Cardiac septum (tissue), 1 donor: ENCODE measurements at regions of chr9 and their contacts with region 1.

Region 1: DNA sequence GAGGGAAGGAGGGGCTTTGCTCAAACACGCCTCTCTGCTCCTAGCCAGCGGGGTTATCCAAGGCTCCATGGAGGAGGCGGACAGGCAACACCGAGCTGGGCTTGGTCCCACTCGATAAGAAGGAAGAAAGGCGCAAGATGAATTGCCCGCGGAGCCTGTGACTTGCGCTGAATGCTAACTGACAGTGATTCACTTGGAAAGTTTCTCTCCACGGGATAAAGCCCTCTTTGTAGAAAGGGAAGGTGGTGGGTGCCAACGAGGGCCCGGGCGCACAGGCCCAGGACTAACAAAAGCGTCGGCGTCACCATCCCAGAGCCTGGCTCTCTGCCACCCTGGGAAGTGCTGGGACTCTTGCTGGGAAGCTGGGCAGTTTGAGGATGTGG is 76.0 kb downstream of the VAV2 start:
- DNase-seq: no peak

Region 2: DNA sequence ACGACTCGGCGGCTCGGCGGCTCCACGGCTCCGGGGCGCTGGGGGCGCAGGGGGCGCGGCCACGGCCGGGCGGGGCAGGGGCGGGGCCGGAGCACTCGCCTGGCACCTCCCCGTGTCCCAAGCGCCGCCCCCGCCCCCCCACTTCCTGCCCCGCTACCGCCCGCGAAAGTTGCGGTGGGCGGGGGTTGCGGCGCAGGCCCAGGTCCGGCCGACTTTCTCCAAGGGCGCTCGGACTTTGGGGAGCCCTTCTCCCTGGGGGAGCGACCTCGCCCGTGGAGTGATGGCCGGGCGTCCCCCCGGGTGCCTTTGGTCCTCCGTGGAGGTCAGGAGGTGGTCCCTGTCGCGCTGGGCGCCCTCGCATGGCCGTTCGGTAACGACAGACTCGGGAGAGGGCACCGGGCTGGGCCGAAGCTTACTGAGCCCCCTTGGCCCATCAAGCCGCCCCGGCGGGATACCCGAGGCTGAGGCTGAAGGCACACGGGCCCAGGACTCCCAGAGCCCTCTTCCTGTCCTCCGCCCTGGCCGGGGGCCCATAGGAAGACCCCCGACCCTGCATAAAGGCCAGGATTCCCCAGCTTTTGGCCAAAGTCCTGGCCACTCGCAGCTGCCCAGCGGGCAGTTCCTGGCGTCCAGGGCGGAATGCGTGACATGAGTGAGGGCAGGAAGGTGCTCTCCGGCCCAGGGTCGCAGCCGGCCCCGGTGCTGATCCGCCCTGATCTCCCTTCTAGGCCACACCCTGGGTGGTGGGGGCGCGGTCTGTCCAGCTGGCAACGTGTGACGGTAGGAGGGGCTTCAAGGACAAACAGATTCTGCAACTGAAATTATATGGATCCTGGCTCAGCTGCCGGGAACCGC is 76.9 kb after region 1 on chr9:
- intact Hi-C with region 1: loop called (anchors 5 kb)
- DNase-seq: no peak